Heart right ventricle (tissue), 16 donors: ENCODE measurements at regions of chr2 and their contacts with region 1.

Region 1: GRCh38 chr2:70871398-70872211 is 36.0 kb upstream of the CD207 start:
- DNase-seq: peak; percentile 86 to 90
- ATAC-seq: peak; percentile 94 to 98 (median 96)
- H3K4me3 ChIP-seq: peak overlapping the region in 2 of 10 donors; percentile 7 to 23
- H3K27ac ChIP-seq: no peak overlapping the region
- H3K4me1 ChIP-seq: peaks cover 0 to 14% (median 9%) of the 10 kb centered on the region in 9 donors
- H3K27me3 ChIP-seq: peaks cover 0 to 65% (median 60%) of the 10 kb centered on the region in 7 donors
- CTCF ChIP-seq: peak; percentile 90 to 94 (median 92)

Region 2: DNA sequence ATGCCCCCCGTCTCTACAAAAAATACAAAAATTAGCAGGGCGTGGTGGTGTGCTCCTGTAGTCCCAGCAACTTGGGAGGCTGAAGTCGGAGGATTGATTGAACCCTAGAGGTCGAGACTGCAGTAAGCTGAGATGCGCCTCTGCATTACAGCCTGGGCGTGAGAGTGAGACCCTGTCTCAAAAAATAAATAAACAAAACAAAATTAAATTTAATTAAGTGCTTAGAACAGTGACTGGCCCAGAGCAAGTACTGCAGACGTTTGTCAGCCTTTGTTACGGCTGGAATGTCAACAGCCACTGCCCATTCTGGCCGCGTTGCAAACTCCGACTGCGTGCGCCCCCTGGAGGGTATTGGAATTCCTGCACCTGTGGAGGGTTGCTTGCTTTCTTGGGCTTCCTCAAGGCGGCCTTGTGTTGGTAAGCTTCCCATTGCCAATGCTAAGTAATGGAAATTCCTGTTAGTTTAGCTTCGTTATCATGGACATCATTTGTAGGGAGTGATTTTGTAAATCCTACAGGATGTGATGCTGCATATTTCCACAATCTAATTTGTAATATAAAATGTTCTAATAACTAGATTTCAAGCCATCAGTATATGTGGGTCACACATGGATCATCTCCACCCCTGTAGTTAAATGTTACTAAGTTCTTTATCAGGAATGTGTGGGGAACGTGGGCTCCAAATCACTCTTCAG is 48.2 kb after region 1 on chr2:
- intact Hi-C with region 1: loop called (anchors 1 to 5 kb)
- DNase-seq: peak; percentile 81 to 86
- ATAC-seq: peak; percentile 79 to 92 (median 84)
- H3K4me3 ChIP-seq: no peak overlapping the region
- H3K27ac ChIP-seq: no peak overlapping the region
- H3K4me1 ChIP-seq: peaks cover 0 to 11% (median 0%) of the 10 kb centered on the region in 9 donors
- H3K27me3 ChIP-seq: peaks cover 0 to 35% (median 12%) of the 10 kb centered on the region in 7 donors
- CTCF ChIP-seq: peak; percentile 67 to 94 (median 90)

Region 3: DNA sequence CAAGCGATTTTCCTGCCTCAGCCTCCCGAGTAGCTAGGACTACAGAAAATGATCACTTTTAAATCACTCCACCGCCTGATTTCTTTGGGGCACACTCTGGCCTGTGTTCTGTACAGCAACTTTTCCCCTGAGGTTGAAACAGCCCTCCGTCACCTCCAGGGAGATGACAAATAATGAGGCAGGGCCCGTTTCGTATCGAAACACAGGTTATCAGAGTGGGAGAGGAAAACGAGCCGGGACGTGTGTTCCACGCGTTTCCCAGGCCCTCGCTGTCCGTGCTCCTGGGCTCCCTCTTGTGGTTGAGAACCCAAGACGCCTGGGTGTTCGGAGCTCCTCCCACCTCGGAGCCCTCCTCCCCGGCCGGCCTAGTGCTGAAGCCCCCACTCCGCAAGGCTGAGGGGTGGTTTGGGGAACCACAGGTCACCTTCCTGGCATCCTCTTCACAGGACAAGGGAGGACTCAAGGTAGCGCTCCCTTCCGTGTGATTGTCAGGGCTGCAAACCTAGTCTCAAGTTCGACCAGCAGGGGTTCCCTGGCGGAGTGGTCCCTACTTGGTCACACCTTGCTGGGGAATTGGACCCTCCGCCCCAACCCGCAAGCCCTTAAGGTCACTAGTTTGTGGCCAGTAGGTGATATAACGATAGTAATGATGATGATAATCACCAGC is 76.9 kb after region 1 on chr2:
- intact Hi-C with region 1: loop called in 9 of 10 experiments (anchors 1 to 5 kb)
- DNase-seq: peak; percentile 79 to 84
- ATAC-seq: peak; percentile 91 to 97 (median 94)
- H3K4me3 ChIP-seq: peak overlapping the region in 7 of 10 donors; percentile 25 to 49 (median 33)
- H3K27ac ChIP-seq: no peak overlapping the region
- H3K4me1 ChIP-seq: peaks cover 0 to 20% (median 0%) of the 10 kb centered on the region in 9 donors
- H3K27me3 ChIP-seq: peaks cover 0 to 55% (median 20%) of the 10 kb centered on the region in 7 donors
- CTCF ChIP-seq: peak; percentile 58 to 92 (median 89)